ENCODE measurements at regions of chr3 and their contacts with region 1.

Region 1: GRCh38 chr3:101809178-101810021 is 30.4 kb downstream of the NXPE3 start:
- DNase-seq: no peak
- ATAC-seq: peak in 2 of 4 donors; percentile 68 to 75
- H3K4me3 ChIP-seq: no peak overlapping the region
- H3K27ac ChIP-seq: no peak overlapping the region
- H3K4me1 ChIP-seq: peaks cover 10% of the 10 kb centered on the region
- H3K27me3 ChIP-seq: no peaks in the 10 kb centered on the region
- CTCF ChIP-seq: peak; percentile 66

Region 2: GRCh38 chr3:101744735-101745134 is 64.7 kb before region 1 on chr3:
- intact Hi-C with region 1: no loop called
- DNase-seq: no peak
- ATAC-seq: no peak
- H3K4me3 ChIP-seq: no peak overlapping the region
- H3K27ac ChIP-seq: no peak overlapping the region
- H3K4me1 ChIP-seq: no peaks in the 10 kb centered on the region
- H3K27me3 ChIP-seq: no peaks in the 10 kb centered on the region
- CTCF ChIP-seq: no peak

Region 3: DNA sequence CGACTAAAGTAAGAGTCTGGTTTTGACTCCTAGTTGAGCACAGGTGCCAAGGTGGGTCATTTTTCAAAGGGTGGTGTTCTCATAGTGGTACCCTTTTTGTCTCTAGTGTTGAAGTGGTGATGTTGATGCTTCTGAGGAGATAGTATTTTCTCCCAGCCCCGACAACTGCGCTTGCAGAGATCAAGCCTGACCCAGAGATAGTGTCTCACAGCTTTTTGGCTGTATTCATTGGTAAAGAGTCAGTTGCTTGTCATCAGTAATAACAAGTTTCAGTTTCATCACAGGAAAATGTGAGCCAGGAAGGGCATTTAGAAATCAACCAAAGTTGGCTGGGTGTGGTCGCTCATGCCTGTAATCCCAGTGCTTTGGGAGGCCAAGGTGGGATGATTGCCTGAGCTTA is 179.2 kb after region 1 on chr3:
- intact Hi-C with region 1: loop called in 1 of 2 experiments (anchors 10 kb)
- DNase-seq: no peak
- ATAC-seq: no peak
- H3K4me3 ChIP-seq: no peak overlapping the region
- H3K27ac ChIP-seq: no peak overlapping the region
- H3K4me1 ChIP-seq: no peaks in the 10 kb centered on the region
- H3K27me3 ChIP-seq: no peaks in the 10 kb centered on the region
- CTCF ChIP-seq: no peak

Region 4: DNA sequence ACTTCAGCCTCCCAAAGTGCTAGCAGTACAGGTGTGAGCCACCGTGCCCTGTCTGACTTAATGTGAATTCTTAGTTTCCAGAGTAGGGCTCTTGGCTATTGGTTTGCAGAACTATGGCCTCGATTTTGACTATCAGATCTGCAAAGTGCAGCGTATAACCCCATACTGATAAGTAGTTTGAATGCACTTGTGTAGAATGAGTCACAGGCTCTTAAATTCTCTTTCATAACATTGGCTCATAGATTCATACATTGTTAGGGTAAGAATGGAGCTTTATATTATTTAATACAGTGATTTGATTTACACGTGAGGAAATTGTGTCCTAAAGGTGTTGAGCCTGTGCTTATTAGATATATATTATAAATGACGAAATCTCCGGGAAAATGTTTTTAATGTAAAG is 735.3 kb after region 1 on chr3:
- intact Hi-C with region 1: loop called in 1 of 2 experiments (anchors 5 kb)
- DNase-seq: no peak
- ATAC-seq: no peak
- H3K4me3 ChIP-seq: no peak overlapping the region
- H3K27ac ChIP-seq: no peak overlapping the region
- H3K4me1 ChIP-seq: no peaks in the 10 kb centered on the region
- H3K27me3 ChIP-seq: peaks cover 0 to 4% (median 0%) of the 10 kb centered on the region in 3 donors
- CTCF ChIP-seq: no peak

Measured in psoas muscle (tissue), 8 donors.